Caco-2 (cell line): ENCODE measurements at regions of chr14 and their contacts with region 1.

Region 1: GRCh38 chr14:24114536-24115450 is at the starts of genes DCAF11 and NRL:
- DNase-seq: peak; percentile 98 to 99
- H3K4me3 ChIP-seq: peak within 1 kb of the TSS; percentile 77
- H3K4me3 Mint-ChIP-seq: peak within 1 kb of the TSS; percentile 100
- H3K27ac Mint-ChIP-seq: peak within 1 kb of the TSS; percentile 98
- H3K4me1 ChIP-seq: no peaks in the 10 kb centered on the region
- H3K4me1 Mint-ChIP-seq: peaks cover 13% of the 10 kb centered on the region
- H3K27me3 ChIP-seq: no peaks in the 10 kb centered on the region
- H3K27me3 Mint-ChIP-seq: no peaks in the 10 kb centered on the region
- CTCF ChIP-seq: no peak
- total RNA-seq, gene DCAF11: 58.1 and 65.9 TPM in 2 replicates
- total RNA-seq, gene NRL: 2.1 and 2.3 TPM in 2 replicates

Region 2: GRCh38 chr14:24058260-24058950 is 56.4 kb before region 1 on chr14:
- CTCF ChIA-PET with region 1: interaction called, 155 read pairs
- POLR2A ChIA-PET with region 1: interaction called, 3 read pairs
- intact Hi-C with region 1: loop called (anchors 1 kb)
- DNase-seq: peak; percentile 70 to 81
- H3K4me3 ChIP-seq: no peak overlapping the region
- H3K4me3 Mint-ChIP-seq: no peak overlapping the region
- H3K27ac Mint-ChIP-seq: no peak overlapping the region
- H3K4me1 ChIP-seq: no peaks in the 10 kb centered on the region; the same call in 1 of the 2 replicates
- H3K4me1 Mint-ChIP-seq: no peaks in the 10 kb centered on the region
- H3K27me3 ChIP-seq: no peaks in the 10 kb centered on the region
- H3K27me3 Mint-ChIP-seq: peaks cover 3% of the 10 kb centered on the region
- CTCF ChIP-seq: peak; percentile 66 to 85

Region 3: GRCh38 chr14:24135834-24136542 is 21.2 kb after region 1 on chr14 and contains the start of gene PSME1:
- CTCF ChIA-PET with region 1: interaction called, 17 read pairs
- POLR2A ChIA-PET with region 1: interaction called, 57 read pairs
- intact Hi-C with region 1: loop called (anchors 1 kb)
- DNase-seq: peak; percentile 94 to 95
- H3K4me3 ChIP-seq: peak within 1 kb of the TSS; percentile 90
- H3K4me3 Mint-ChIP-seq: peak within 1 kb of the TSS; percentile 77
- H3K27ac Mint-ChIP-seq: peak within 1 kb of the TSS; percentile 57
- H3K4me1 ChIP-seq: no peaks in the 10 kb centered on the region; the same call in 1 of the 2 replicates
- H3K4me1 Mint-ChIP-seq: peaks cover 32% of the 10 kb centered on the region
- H3K27me3 ChIP-seq: no peaks in the 10 kb centered on the region
- H3K27me3 Mint-ChIP-seq: no peaks in the 10 kb centered on the region
- CTCF ChIP-seq: no peak
- total RNA-seq, gene PSME1: 130 and 141 TPM in 2 replicates

Region 4: DNA sequence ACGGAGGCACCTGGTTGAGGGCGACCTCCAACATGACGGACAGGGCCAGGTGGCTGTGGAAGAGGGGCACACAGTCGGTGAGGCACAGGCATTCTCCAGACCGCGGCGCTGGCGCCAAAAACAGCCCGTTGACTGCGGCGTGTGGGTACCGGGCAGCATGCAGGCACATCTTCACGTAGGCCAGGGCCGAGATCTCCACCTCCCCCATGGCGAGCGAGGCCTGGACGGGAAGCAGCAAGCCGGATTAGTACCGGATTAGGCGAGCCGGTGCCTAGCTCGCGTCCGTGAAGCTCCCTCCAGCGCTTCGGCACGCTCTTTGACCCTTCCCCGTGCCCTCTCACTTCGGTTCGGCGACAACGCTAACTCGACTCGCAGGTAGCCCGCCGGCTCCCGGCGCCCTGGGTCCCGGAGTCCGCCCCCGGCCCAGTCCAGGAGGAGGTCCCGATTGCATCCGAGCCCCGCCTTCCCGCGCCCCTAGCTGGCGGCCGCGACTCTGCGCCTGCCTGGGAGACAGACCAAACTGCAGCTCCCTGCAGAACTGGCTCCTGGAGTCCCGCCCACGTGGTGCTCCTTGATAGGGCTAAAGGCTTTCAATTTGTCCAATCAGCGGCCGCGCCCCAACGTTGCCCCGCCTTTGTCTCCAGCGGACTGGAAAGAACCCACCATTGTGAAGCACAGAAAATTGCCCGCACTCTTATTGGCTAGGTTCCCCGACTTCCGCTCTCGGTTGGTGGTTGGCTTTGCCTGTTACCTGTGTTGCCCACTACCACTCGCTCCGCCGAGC is 26.5 kb after region 1 on chr14 and contains the start of gene EMC9:
- CTCF ChIA-PET with region 1: interaction called, 17 read pairs
- POLR2A ChIA-PET with region 1: interaction called, 57 read pairs
- intact Hi-C with region 1: loop called (anchors 1 kb)
- DNase-seq: peak; percentile 99 to 100
- H3K4me3 ChIP-seq: peak within 1 kb of the TSS; percentile 84
- H3K4me3 Mint-ChIP-seq: peak within 1 kb of the TSS; percentile 99
- H3K27ac Mint-ChIP-seq: peak within 1 kb of the TSS; percentile 88
- H3K4me1 ChIP-seq: no peaks in the 10 kb centered on the region; the same call in 1 of the 2 replicates
- H3K4me1 Mint-ChIP-seq: peaks cover 43% of the 10 kb centered on the region
- H3K27me3 ChIP-seq: no peaks in the 10 kb centered on the region
- H3K27me3 Mint-ChIP-seq: no peaks in the 10 kb centered on the region
- CTCF ChIP-seq: peak; percentile 13 to 50
- total RNA-seq, gene EMC9: 31.1 and 32.4 TPM in 2 replicates

Region 5: GRCh38 chr14:24188251-24189058 is 73.7 kb after region 1 on chr14 and contains the start of gene IPO4:
- CTCF ChIA-PET with region 1: no interaction called
- POLR2A ChIA-PET with region 1: interaction called, 5 read pairs
- intact Hi-C with region 1: loop called (anchors 2 kb)
- DNase-seq: peak; percentile 96 to 98
- H3K4me3 ChIP-seq: peak within 1 kb of the TSS; percentile 63
- H3K4me3 Mint-ChIP-seq: peak within 1 kb of the TSS; percentile 92
- H3K27ac Mint-ChIP-seq: peak within 1 kb of the TSS; percentile 94
- H3K4me1 ChIP-seq: no peaks in the 10 kb centered on the region
- H3K4me1 Mint-ChIP-seq: peaks cover 14% of the 10 kb centered on the region
- H3K27me3 ChIP-seq: no peaks in the 10 kb centered on the region
- H3K27me3 Mint-ChIP-seq: no peaks in the 10 kb centered on the region
- CTCF ChIP-seq: no peak
- total RNA-seq, gene IPO4: 85.4 and 95.8 TPM in 2 replicates

Region 6: GRCh38 chr14:24195191-24196070 is 80.6 kb after region 1 on chr14 and contains the start of gene TM9SF1:
- CTCF ChIA-PET with region 1: no interaction called
- POLR2A ChIA-PET with region 1: interaction called, 10 read pairs
- intact Hi-C with region 1: no loop called
- DNase-seq: peak; percentile 88 to 90
- H3K4me3 ChIP-seq: peak within 1 kb of the TSS; percentile 95
- H3K4me3 Mint-ChIP-seq: peak within 1 kb of the TSS; percentile 84
- H3K27ac Mint-ChIP-seq: peak within 1 kb of the TSS; percentile 88
- H3K4me1 ChIP-seq: 0 out of 2 replicates have a peak, but pooled peaks cover 9% of the 10 kb centered on the region
- H3K4me1 Mint-ChIP-seq: peaks cover 11% of the 10 kb centered on the region
- H3K27me3 ChIP-seq: no peaks in the 10 kb centered on the region
- H3K27me3 Mint-ChIP-seq: no peaks in the 10 kb centered on the region
- CTCF ChIP-seq: no peak
- total RNA-seq, gene TM9SF1: 41.9 and 47.1 TPM in 2 replicates